ENCODE measurements at regions of chr1 and their contacts with region 1.

Region 1: DNA sequence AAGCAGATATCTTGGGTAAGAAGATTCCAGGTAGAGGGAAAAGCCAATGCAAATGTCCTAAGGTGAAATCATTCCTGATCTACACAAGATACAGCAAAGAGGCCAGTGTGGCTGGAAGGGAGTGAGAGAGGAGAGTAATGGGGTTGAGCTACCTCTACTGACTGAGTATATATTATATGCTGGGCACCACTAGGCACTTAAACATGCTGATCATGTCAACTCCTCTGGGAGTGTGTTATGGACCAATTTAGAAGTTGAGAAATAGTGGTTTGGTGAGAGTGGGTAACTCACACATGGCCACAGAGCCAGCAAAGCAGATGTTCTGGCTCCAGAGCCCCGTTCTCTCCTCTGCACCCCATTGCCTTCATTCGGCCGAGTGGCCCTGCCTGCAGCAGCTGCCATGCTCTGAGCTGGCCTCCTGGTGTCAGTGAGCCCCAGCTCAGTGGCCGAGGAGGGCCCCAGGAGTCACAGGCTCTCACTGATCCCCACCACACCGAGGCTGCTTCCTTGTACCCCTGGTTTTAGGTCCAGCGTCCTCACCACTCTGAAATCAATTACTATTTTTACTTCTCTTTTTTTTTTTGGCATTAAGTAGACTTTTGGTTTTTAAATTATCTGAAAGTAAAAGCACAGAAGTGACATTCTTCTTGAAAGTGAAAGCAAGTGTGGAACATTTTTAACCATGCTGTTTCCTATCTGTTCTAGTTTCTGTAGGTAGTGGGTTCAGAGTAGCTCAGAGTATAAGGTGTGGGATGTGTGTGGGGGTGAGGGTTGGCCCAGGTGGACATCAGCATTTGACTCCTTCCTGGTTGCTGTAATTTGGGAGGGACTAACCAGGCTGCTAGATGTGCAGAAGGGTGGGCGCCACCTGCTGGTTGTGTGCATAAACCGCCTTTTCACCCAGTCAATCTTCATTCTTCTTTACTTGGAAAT is 45.8 kb upstream of the CRNN start:
- DNase-seq: peak; percentile 39 to 83
- ATAC-seq: peak; percentile 61 to 86; a peak in 4 of 6 replicates
- H3K4me3 ChIP-seq: no peak overlapping the region
- H3K27ac ChIP-seq: peak overlapping the region in 1 of 2 experiments; percentile 15; a peak in 1 of 6 replicates
- H3K4me1 ChIP-seq: no peaks in the 10 kb centered on the region
- CTCF ChIP-seq: peak; percentile 69
- EP300 ChIP-seq: no peak
- POLR2A ChIP-seq: no peak
- RAD21 ChIP-seq: no peak; a peak in 1 of 5 replicates

Region 2: GRCh38 chr1:152001391-152002249 is 458.2 kb before region 1 on chr1:
- CTCF ChIA-PET with region 1: interaction called, 17 read pairs
- POLR2A ChIA-PET with region 1: no interaction called
- DNase-seq: peak; percentile 66 to 89
- ATAC-seq: peak; percentile 66 to 70
- H3K4me3 ChIP-seq: no peak overlapping the region
- H3K27ac ChIP-seq: peak overlapping the region; percentile 72 to 83
- H3K4me1 ChIP-seq: peaks cover 52% of the 10 kb centered on the region
- CTCF ChIP-seq: peak; percentile 95
- EP300 ChIP-seq: no peak
- POLR2A ChIP-seq: no peak
- RAD21 ChIP-seq: peak; percentile 99

Region 3: DNA sequence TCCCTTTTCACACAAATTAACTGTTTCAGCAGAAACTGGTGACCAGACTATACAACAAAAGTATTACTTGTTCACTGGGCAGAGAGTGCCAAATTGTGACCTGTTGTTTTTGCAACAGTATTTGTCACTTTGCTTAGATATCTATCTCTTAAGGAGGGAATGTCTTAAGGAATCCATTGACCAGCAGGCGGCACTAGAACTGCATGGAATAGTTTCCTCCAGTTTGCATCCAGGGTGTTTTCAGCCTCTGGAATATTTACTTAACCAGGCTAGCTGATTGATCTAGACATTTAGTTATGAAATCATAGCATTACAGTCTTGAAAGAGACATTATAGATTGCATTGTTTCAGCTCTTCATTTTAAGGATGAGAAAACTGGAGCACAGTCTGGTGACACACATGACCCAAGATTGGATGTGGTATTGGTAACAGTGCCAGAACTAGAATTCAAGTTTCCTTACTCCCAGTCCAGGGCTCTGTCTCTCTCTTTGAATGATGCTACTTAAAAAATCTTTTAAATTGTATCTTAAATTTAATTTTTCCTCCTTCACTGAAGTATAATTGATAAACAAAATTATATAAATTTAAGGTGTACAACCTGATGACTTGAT is 317.8 kb before region 1 on chr1:
- CTCF ChIA-PET with region 1: interaction called, 30 read pairs
- POLR2A ChIA-PET with region 1: no interaction called
- DNase-seq: peak; percentile 38 to 78
- ATAC-seq: peak; percentile 92 to 94
- H3K4me3 ChIP-seq: no peak overlapping the region
- H3K27ac ChIP-seq: no peak overlapping the region
- H3K4me1 ChIP-seq: no peaks in the 10 kb centered on the region
- CTCF ChIP-seq: peak; percentile 98
- EP300 ChIP-seq: no peak
- POLR2A ChIP-seq: no peak
- RAD21 ChIP-seq: peak; percentile 96 to 97

Region 4: GRCh38 chr1:152189657-152190442 is 270.0 kb before region 1 on chr1:
- CTCF ChIA-PET with region 1: interaction called, 161 read pairs
- POLR2A ChIA-PET with region 1: interaction called, 9 read pairs
- DNase-seq: peak; percentile 70 to 83
- ATAC-seq: peak; percentile 62 to 79
- H3K4me3 ChIP-seq: peak overlapping the region; percentile 80
- H3K27ac ChIP-seq: peak overlapping the region; percentile 88 to 89
- H3K4me1 ChIP-seq: peaks cover 14% of the 10 kb centered on the region
- CTCF ChIP-seq: peak; percentile 89
- EP300 ChIP-seq: no peak
- POLR2A ChIP-seq: no peak
- RAD21 ChIP-seq: peak; percentile 82 to 85

Region 5: GRCh38 chr1:152313319-152313801 is 146.5 kb before region 1 on chr1:
- CTCF ChIA-PET with region 1: no interaction called
- POLR2A ChIA-PET with region 1: no interaction called
- DNase-seq: no peak
- ATAC-seq: no peak
- H3K4me3 ChIP-seq: no peak overlapping the region
- H3K27ac ChIP-seq: no peak overlapping the region
- H3K4me1 ChIP-seq: no peaks in the 10 kb centered on the region
- CTCF ChIP-seq: no peak
- EP300 ChIP-seq: no peak
- POLR2A ChIP-seq: no peak
- RAD21 ChIP-seq: no peak

Region 6: GRCh38 chr1:152426731-152427130 is 33.1 kb before region 1 on chr1:
- CTCF ChIA-PET with region 1: interaction called, 21 read pairs
- POLR2A ChIA-PET with region 1: no interaction called
- DNase-seq: no peak
- ATAC-seq: no peak
- H3K4me3 ChIP-seq: no peak overlapping the region
- H3K27ac ChIP-seq: no peak overlapping the region
- H3K4me1 ChIP-seq: no peaks in the 10 kb centered on the region
- CTCF ChIP-seq: no peak
- EP300 ChIP-seq: no peak
- POLR2A ChIP-seq: no peak
- RAD21 ChIP-seq: no peak

Region 7: GRCh38 chr1:152479792-152480595 is 20.1 kb after region 1 on chr1:
- CTCF ChIA-PET with region 1: interaction called, 30 read pairs
- POLR2A ChIA-PET with region 1: no interaction called
- DNase-seq: peak; percentile 61 to 83
- ATAC-seq: peak; percentile 92 to 99
- H3K4me3 ChIP-seq: no peak overlapping the region
- H3K27ac ChIP-seq: no peak overlapping the region
- H3K4me1 ChIP-seq: no peaks in the 10 kb centered on the region
- CTCF ChIP-seq: peak; percentile 42
- EP300 ChIP-seq: no peak
- POLR2A ChIP-seq: no peak
- RAD21 ChIP-seq: peak in 1 of 2 experiments; percentile 18; a peak in 1 of 5 replicates

Region 8: DNA sequence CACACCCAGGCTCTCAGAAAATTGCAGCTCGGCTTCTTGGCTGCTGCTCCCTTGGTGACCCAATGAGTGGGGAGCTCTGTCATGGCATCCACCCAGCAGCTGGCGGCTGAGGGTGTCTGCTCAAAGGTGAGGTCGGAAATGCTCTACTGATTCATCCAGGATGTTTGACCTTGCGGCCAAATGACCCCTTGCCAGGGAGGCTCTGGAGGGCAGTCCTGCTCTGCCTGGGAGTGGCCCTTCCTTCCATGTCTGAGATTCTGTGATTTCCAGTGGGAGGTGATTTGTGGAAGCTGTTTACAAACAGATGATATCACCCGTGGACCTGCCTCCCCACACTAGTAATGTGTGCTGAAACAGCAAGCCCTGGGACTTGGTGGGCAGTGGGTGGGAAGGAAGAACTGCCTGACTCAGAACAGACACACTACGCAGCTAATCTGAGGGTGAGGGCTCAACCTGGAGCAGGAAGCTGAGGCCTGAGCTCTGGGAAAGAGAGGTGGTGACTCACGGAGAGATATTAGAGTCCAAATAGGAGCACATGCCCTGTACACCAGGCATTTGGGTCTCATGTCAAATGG is 57.5 kb after region 1 on chr1:
- CTCF ChIA-PET with region 1: interaction called, 12 read pairs
- POLR2A ChIA-PET with region 1: no interaction called
- DNase-seq: peak; percentile 64 to 91
- ATAC-seq: peak; percentile 90 to 92
- H3K4me3 ChIP-seq: no peak overlapping the region
- H3K27ac ChIP-seq: peak overlapping the region; percentile 75 to 88
- H3K4me1 ChIP-seq: peaks cover 35% of the 10 kb centered on the region
- CTCF ChIP-seq: no peak
- EP300 ChIP-seq: peak in 1 of 2 experiments; percentile 69; a peak in 1 of 5 replicates
- POLR2A ChIP-seq: no peak
- RAD21 ChIP-seq: peak; percentile 6 to 21; a peak in 2 of 5 replicates

Measured in A549 (cell line).